Dorsolateral prefrontal cortex (tissue), 120 donors: ENCODE measurements at regions of chr10 and their contacts with region 1.

Region 1: DNA sequence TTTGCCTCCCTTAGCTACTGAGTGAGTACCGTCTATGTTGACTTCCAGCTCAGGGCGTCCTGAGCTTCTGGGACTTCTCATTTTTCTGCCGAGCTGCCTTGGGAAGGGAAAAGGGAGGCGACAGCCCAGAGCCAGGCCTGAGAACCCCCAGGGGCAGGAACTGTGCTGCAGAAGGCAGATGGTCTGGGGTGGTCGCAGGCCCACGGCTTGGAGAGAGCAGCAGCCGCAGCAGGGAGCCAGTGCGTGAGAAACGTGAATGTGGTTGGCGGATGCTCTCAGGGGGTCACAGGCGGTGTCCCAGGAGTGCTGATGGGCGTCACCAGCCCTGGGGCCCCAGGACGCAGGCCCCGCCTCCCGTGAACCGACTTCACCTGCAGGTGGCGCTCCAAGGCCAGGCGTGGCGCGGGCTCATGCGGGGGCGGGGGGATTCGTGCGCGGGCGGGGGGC is 9.2 kb upstream of the PWWP2B start:
- DNase-seq: peak in 4 of 10 donors; percentile 20 to 57 (median 49)
- H3K4me3 ChIP-seq: peak overlapping the region in 1 of 59 donors; percentile 30
- H3K27ac ChIP-seq: peak overlapping the region in 7 of 59 donors; percentile 15 to 64 (median 28)
- H3K27me3 ChIP-seq: no peaks in the 10 kb centered on the region
- CTCF ChIP-seq: peak; percentile 19 to 76 (median 58)

Region 2: GRCh38 chr10:131748831-131749766 is 638.7 kb before region 1 on chr10:
- intact Hi-C with region 1: no loop called
- DNase-seq: peak in 4 of 10 donors; percentile 37 to 55 (median 41)
- H3K4me3 ChIP-seq: no peak overlapping the region
- H3K27ac ChIP-seq: peak overlapping the region in 1 of 59 donors; percentile 36
- H3K27me3 ChIP-seq: peaks cover 0 to 28% (median 0%) of the 10 kb centered on the region in 45 donors
- CTCF ChIP-seq: no peak

Region 3: DNA sequence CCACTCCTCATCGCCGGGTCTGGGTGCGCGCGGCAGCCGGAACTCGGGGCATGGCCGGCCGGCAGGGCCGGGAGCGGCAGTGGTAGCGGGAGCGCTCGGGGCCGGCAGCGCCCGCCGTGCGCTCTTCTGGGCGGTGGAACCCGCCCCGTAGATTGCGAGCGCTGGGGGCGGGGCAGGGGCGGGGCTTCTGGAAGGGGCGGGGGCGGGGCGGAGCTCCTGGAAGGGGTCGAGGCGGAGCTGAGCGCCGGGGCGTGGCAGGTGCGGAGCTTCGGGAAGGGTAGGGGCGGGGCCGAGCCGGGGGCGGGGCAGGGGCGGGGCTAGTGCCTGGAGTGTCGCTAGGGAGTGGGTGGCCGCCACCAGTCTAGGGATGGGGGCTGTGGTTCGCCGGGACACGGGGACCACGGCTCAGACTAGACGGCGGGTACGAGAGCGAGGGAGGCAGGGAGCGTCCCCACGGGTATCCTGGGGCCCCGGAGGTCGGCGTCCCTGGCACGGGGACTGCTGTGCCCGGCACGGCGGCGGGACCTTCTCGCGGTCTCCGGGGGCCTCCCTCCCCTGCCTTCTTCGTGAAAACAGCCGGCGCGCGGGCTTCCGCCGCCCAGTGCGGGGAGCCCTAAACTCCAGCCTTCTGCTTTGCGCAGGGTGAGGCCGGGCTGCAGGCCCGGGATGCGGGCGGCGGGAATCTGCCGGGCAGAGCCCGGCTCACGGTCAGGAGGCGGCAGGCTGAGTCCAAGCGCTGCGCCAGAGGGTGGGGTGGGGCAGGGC is 79.8 kb before region 1 on chr10 and contains the start of gene STK32C:
- intact Hi-C with region 1: no loop called
- DNase-seq: peak; percentile 77 to 94 (median 90)
- H3K4me3 ChIP-seq: peak within 1 kb of the TSS; percentile 66 to 99 (median 92)
- H3K27ac ChIP-seq: peak within 1 kb of the TSS in 50 of 59 donors; percentile 26 to 88 (median 76)
- H3K27me3 ChIP-seq: no peaks in the 10 kb centered on the region
- CTCF ChIP-seq: peak in 14 of 56 donors; percentile 8 to 33 (median 18)
- total RNA-seq, gene STK32C: 30.1 to 78.4 (median 57.0) TPM

Region 4: GRCh38 chr10:132627666-132628531 is 240.1 kb after region 1 on chr10:
- intact Hi-C with region 1: loop called (anchors 5 to 10 kb)
- DNase-seq: peak in 5 of 10 donors; percentile 29 to 55 (median 51)
- H3K4me3 ChIP-seq: peak overlapping the region in 40 of 59 donors; percentile 0 to 55 (median 26)
- H3K27ac ChIP-seq: peak overlapping the region; percentile 42 to 97 (median 88)
- H3K27me3 ChIP-seq: no peaks in the 10 kb centered on the region
- CTCF ChIP-seq: no peak